ENCODE measurements at regions of chr12 and their contacts with region 1.

Region 1: GRCh38 chr12:127284870-127285431 is 982.0 kb upstream of the TMEM132C start:
- DNase-seq: no peak
- ATAC-seq: peak in 1 of 8 donors; percentile 61
- H3K4me3 ChIP-seq: no peak overlapping the region
- H3K27ac ChIP-seq: no peak overlapping the region
- H3K4me1 ChIP-seq: peaks cover 0 to 2% (median 0%) of the 10 kb centered on the region in 9 donors
- H3K27me3 ChIP-seq: peaks cover 0 to 18% (median 11%) of the 10 kb centered on the region in 7 donors
- CTCF ChIP-seq: no peak

Region 2: DNA sequence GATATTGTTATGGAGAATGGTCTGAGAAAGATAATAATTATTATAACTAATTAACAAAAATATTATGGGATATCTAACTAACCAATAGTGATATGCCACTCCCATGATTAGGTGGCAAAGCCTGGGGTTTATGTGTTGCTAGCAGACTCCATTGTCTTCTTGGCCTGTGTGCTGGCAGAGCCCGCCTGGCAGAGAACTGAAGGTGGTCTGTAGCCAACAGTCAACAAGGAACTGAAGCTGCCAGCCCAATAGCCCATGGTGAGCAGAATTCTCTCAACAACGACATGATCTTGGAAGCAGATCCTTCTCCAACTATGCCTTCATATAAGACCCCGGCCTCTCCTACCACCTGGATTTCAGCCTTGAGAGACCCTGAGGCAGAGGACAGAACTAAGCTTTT is 1280.0 kb after region 1 on chr12:
- intact Hi-C with region 1: loop called in 1 of 10 experiments (anchors 5 kb)
- DNase-seq: no peak
- ATAC-seq: no peak
- H3K4me3 ChIP-seq: no peak overlapping the region
- H3K27ac ChIP-seq: no peak overlapping the region
- H3K4me1 ChIP-seq: no peaks in the 10 kb centered on the region
- H3K27me3 ChIP-seq: peaks cover 0 to 4% (median 0%) of the 10 kb centered on the region in 7 donors
- CTCF ChIP-seq: no peak

Measured in heart right ventricle (tissue), 16 donors.